Activated naive CD4-positive, alpha-beta T cell treated with anti-CD3 and anti-CD28 coated beads for 36 hours (primary cell): ENCODE measurements at regions of chr5 and their contacts with region 1.

Region 1: GRCh38 chr5:159331093-159331973 is 1.0 kb upstream of the IL12B start:
- DNase-seq: peak; percentile 79
- H3K4me3 Mint-ChIP-seq: peak overlapping the region; percentile 52
- H3K27ac Mint-ChIP-seq: no peak overlapping the region
- H3K4me1 Mint-ChIP-seq: peaks cover 11% of the 10 kb centered on the region
- H3K27me3 Mint-ChIP-seq: no peaks in the 10 kb centered on the region

Region 2: GRCh38 chr5:158910782-158911692 is 420.3 kb before region 1 on chr5:
- CTCF ChIA-PET with region 1: no interaction called
- intact Hi-C with region 1: no loop called
- DNase-seq: peak; percentile 10
- H3K4me3 Mint-ChIP-seq: no peak overlapping the region
- H3K27ac Mint-ChIP-seq: no peak overlapping the region
- H3K4me1 Mint-ChIP-seq: no peaks in the 10 kb centered on the region
- H3K27me3 Mint-ChIP-seq: no peaks in the 10 kb centered on the region

Region 3: GRCh38 chr5:159163027-159163700 is 168.2 kb before region 1 on chr5:
- CTCF ChIA-PET with region 1: no interaction called
- intact Hi-C with region 1: no loop called
- DNase-seq: peak; percentile 41
- H3K4me3 Mint-ChIP-seq: no peak overlapping the region
- H3K27ac Mint-ChIP-seq: peak overlapping the region; percentile 32
- H3K4me1 Mint-ChIP-seq: peaks cover 47% of the 10 kb centered on the region
- H3K27me3 Mint-ChIP-seq: no peaks in the 10 kb centered on the region

Region 4: DNA sequence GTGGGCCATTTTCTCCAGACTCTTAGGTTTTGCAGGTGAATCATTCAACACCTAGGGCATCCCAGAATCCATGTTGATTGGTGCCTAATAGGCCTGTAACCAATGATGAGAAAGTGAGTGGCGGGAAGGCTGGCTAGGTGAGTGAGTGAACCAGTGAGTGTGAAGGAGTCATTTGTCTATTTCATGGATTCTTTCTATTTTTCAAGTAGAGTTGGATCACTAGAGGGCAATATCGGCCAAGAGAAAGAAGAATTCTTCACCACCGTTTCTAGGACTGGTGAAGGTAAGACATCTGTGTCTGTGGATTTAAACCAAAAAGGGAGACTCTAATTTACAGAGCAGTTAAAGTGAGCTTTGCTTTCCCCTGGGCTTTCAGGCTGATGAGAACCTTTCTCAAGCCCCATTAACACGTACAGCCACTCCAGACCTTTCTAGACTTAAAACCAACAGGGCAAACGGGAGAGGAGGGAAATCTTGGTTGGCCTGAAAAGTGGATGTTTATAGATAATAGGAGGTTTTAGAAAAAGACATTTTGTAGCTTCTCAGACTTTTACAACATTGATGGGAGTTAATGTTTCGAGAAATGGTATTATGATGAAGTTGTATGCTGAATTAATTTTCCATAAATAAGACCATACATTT is 113.2 kb after region 1 on chr5:
- CTCF ChIA-PET with region 1: no interaction called
- intact Hi-C with region 1: loop called (anchors 5 kb)
- DNase-seq: no peak
- H3K4me3 Mint-ChIP-seq: no peak overlapping the region
- H3K27ac Mint-ChIP-seq: no peak overlapping the region
- H3K4me1 Mint-ChIP-seq: no peaks in the 10 kb centered on the region
- H3K27me3 Mint-ChIP-seq: peaks cover 6% of the 10 kb centered on the region

Region 5: GRCh38 chr5:159773062-159773924 is 442.0 kb after region 1 on chr5:
- CTCF ChIA-PET with region 1: no interaction called
- intact Hi-C with region 1: loop called (anchors 5 kb)
- DNase-seq: peak; percentile 86
- H3K4me3 Mint-ChIP-seq: peak overlapping the region; percentile 41
- H3K27ac Mint-ChIP-seq: no peak overlapping the region
- H3K4me1 Mint-ChIP-seq: peaks cover 8% of the 10 kb centered on the region
- H3K27me3 Mint-ChIP-seq: peaks cover 32% of the 10 kb centered on the region

Region 6: DNA sequence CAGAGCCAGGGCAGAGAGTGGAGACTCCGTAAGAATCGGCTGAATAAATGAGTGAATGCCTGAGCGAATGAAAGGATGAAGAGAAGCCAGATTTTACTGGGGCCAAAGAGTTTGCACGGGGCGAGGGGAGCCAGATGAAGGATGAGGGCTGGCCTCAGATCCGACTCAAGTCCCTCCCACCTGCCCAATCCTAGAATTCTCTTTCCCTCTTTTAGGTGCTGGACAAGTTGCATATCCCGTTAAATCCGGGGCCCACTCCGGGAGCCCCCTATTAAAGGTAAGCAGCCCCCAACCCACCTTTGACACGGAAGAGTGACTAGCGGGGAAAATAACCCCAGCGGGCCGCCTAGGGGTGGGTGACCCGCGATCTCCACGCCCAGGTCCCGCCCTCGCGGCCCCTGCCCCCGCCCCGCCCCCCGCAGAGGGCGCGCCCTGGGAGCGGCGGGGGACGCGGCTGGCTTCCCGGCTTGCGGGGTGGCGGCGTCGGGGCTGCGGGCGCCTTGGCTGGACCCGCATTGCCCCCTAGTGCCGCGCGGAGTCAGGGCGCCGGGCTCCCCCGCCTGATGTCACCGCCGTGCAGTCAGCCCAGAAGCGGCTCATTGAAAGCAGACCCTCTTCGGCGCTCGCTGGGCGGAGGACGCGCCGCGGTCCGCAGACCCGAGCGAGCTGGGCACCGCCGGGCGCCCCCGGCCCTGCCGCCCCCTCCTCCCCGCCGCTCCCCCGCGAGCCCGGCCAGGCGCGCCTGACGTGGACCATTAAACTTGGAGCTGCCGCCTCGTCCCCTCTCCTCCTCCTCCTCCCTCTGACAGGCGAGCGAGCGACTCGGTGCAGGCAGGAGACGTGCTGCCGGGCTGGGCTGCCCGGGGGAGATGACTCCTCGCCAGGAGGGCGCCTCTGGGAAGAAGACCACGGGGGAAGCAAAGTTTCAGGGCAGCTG is 584.8 kb after region 1 on chr5 and contains the start of gene ADRA1B:
- CTCF ChIA-PET with region 1: no interaction called
- intact Hi-C with region 1: loop called (anchors 1 kb)
- DNase-seq: peak; percentile 66
- H3K4me3 Mint-ChIP-seq: peak within 1 kb of the TSS; percentile 36
- H3K27ac Mint-ChIP-seq: no peak within 1 kb of the TSS
- H3K4me1 Mint-ChIP-seq: peaks cover 6% of the 10 kb centered on the region
- H3K27me3 Mint-ChIP-seq: peaks cover 44% of the 10 kb centered on the region
- total RNA-seq, gene ADRA1B: not detected

Region 7: GRCh38 chr5:159965031-159965837 is 633.9 kb after region 1 on chr5:
- CTCF ChIA-PET with region 1: no interaction called
- intact Hi-C with region 1: loop called (anchors 5 kb)
- DNase-seq: peak; percentile 55
- H3K4me3 Mint-ChIP-seq: no peak overlapping the region
- H3K27ac Mint-ChIP-seq: no peak overlapping the region
- H3K4me1 Mint-ChIP-seq: no peaks in the 10 kb centered on the region
- H3K27me3 Mint-ChIP-seq: peaks cover 28% of the 10 kb centered on the region

Region 8: GRCh38 chr5:159987031-159987674 is 655.8 kb after region 1 on chr5:
- CTCF ChIA-PET with region 1: interaction called, 3 read pairs
- intact Hi-C with region 1: loop called (anchors 5 kb)
- DNase-seq: peak; percentile 83
- H3K4me3 Mint-ChIP-seq: peak overlapping the region; percentile 56
- H3K27ac Mint-ChIP-seq: no peak overlapping the region
- H3K4me1 Mint-ChIP-seq: no peaks in the 10 kb centered on the region
- H3K27me3 Mint-ChIP-seq: peaks cover 20% of the 10 kb centered on the region

Region 9: GRCh38 chr5:160008877-160009590 is 677.7 kb after region 1 on chr5 and contains the start of gene TTC1:
- CTCF ChIA-PET with region 1: no interaction called
- intact Hi-C with region 1: loop called (anchors 5 kb)
- DNase-seq: peak; percentile 98
- H3K4me3 Mint-ChIP-seq: peak within 1 kb of the TSS; percentile 98
- H3K27ac Mint-ChIP-seq: peak within 1 kb of the TSS; percentile 94
- H3K4me1 Mint-ChIP-seq: peaks cover 27% of the 10 kb centered on the region
- H3K27me3 Mint-ChIP-seq: no peaks in the 10 kb centered on the region
- total RNA-seq, gene TTC1: 46.0 to 47.1 TPM